CD8-positive, alpha-beta T cell (primary cell): ENCODE measurements at regions of chr1 and their contacts with region 1.

Region 1: GRCh38 chr1:84753516-84754385 is 63.5 kb upstream of the SSX2IP start:
- DNase-seq: peak; percentile 56 to 86 (median 73)
- ATAC-seq: peak; percentile 93
- H3K4me3 ChIP-seq: no peak overlapping the region
- H3K4me3 Mint-ChIP-seq: no peak overlapping the region
- H3K27ac ChIP-seq: no peak overlapping the region
- H3K27ac Mint-ChIP-seq: no peak overlapping the region
- H3K4me1 ChIP-seq: no peaks in the 10 kb centered on the region
- H3K4me1 Mint-ChIP-seq: no peaks in the 10 kb centered on the region
- H3K27me3 ChIP-seq: no peaks in the 10 kb centered on the region
- H3K27me3 Mint-ChIP-seq: peaks cover 19% of the 10 kb centered on the region
- CTCF ChIP-seq: peak; percentile 94

Region 2: DNA sequence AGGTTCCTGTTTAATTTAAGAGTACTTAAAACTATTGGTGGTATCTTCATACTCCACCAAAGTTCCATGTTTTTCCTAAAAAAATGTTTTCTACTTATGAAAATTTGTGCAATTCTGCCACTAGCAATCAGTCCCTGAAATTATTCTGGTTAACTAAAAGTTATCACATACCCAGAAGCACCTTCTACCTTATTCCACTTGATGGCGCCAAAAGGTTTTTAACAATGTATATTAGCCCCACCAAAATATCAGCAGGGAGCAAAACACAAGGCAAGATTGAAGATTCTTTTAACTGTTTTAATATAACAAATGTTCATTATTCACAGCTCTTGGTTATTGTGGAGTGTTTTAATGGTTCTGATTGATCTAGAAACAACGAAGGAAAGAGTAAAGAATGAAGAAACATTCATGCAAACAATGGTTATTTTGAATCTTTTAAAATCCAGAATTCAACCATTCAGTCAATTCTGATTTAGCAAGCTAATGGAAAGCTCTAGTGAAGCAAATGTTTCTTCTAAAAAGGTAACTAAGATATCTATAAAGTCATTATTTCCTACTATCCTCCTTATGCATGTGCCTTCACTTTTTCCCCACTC is 822.0 kb before region 1 on chr1:
- CTCF ChIA-PET with region 1: interaction called, 12 read pairs
- POLR2A ChIA-PET with region 1: no interaction called
- intact Hi-C with region 1: loop called (anchors 1 to 2 kb)
- DNase-seq: peak in 3 of 9 experiments; percentile 11 to 69 (median 58)
- ATAC-seq: peak; percentile 69
- H3K4me3 ChIP-seq: no peak overlapping the region
- H3K4me3 Mint-ChIP-seq: no peak overlapping the region
- H3K27ac ChIP-seq: no peak overlapping the region
- H3K27ac Mint-ChIP-seq: no peak overlapping the region
- H3K4me1 ChIP-seq: no peaks in the 10 kb centered on the region
- H3K4me1 Mint-ChIP-seq: no peaks in the 10 kb centered on the region
- H3K27me3 ChIP-seq: no peaks in the 10 kb centered on the region
- H3K27me3 Mint-ChIP-seq: peaks cover 7% of the 10 kb centered on the region
- CTCF ChIP-seq: peak; percentile 86

Region 3: DNA sequence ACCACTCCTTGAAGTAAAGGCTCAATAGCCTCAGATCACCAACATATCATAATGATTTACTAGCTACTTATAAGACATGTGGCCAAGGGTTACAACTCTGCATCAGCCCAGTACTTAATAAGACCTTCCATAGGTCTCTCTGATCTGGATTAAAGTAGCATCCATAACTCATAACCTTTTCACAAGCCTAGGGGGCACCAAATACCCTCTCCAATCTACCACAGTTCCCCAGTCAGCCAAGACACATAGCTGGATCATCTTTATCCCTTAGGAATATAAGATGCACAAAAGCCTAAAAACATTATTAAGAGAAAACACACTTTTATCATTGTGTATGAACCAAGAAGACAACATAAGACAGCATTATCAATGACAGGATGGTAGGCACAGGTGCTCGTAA is 85.6 kb before region 1 on chr1:
- CTCF ChIA-PET with region 1: interaction called, 18 read pairs
- POLR2A ChIA-PET with region 1: no interaction called
- intact Hi-C with region 1: loop called (anchors 1 to 5 kb)
- DNase-seq: peak in 2 of 9 experiments; percentile 33 to 48
- ATAC-seq: peak; percentile 36
- H3K4me3 ChIP-seq: no peak overlapping the region
- H3K4me3 Mint-ChIP-seq: no peak overlapping the region
- H3K27ac ChIP-seq: no peak overlapping the region
- H3K27ac Mint-ChIP-seq: no peak overlapping the region
- H3K4me1 ChIP-seq: no peaks in the 10 kb centered on the region
- H3K4me1 Mint-ChIP-seq: peaks cover 9% of the 10 kb centered on the region
- H3K27me3 ChIP-seq: no peaks in the 10 kb centered on the region
- H3K27me3 Mint-ChIP-seq: no peaks in the 10 kb centered on the region
- CTCF ChIP-seq: no peak

Region 4: GRCh38 chr1:84763912-84764663 is 10.3 kb after region 1 on chr1:
- CTCF ChIA-PET with region 1: interaction called, 25 read pairs
- POLR2A ChIA-PET with region 1: no interaction called
- intact Hi-C with region 1: no loop called
- DNase-seq: no peak
- ATAC-seq: no peak
- H3K4me3 ChIP-seq: no peak overlapping the region
- H3K4me3 Mint-ChIP-seq: no peak overlapping the region
- H3K27ac ChIP-seq: no peak overlapping the region
- H3K27ac Mint-ChIP-seq: no peak overlapping the region
- H3K4me1 ChIP-seq: no peaks in the 10 kb centered on the region
- H3K4me1 Mint-ChIP-seq: peaks cover 4% of the 10 kb centered on the region
- H3K27me3 ChIP-seq: no peaks in the 10 kb centered on the region
- H3K27me3 Mint-ChIP-seq: peaks cover 6% of the 10 kb centered on the region
- CTCF ChIP-seq: no peak